ENCODE measurements at regions of chr12 and their contacts with region 1.

Region 1: GRCh38 chr12:6662906-6663742 is at the start of gene ING4:
- DNase-seq: peak; percentile 97 to 99 (median 98)
- ATAC-seq: peak; percentile 99 to 100 (median 100)
- H3K4me3 ChIP-seq: peak within 1 kb of the TSS; percentile 40 to 86 (median 74)
- H3K27ac ChIP-seq: peak within 1 kb of the TSS; percentile 51 to 90 (median 78)
- H3K4me1 ChIP-seq: peaks cover 0 to 24% (median 12%) of the 10 kb centered on the region in 12 donors
- H3K27me3 ChIP-seq: no peaks in the 10 kb centered on the region
- CTCF ChIP-seq: no peak
- POLR2A ChIP-seq: no peak
- total RNA-seq, gene ING4: 17.4 to 39.0 (median 24.7) TPM

Region 2: DNA sequence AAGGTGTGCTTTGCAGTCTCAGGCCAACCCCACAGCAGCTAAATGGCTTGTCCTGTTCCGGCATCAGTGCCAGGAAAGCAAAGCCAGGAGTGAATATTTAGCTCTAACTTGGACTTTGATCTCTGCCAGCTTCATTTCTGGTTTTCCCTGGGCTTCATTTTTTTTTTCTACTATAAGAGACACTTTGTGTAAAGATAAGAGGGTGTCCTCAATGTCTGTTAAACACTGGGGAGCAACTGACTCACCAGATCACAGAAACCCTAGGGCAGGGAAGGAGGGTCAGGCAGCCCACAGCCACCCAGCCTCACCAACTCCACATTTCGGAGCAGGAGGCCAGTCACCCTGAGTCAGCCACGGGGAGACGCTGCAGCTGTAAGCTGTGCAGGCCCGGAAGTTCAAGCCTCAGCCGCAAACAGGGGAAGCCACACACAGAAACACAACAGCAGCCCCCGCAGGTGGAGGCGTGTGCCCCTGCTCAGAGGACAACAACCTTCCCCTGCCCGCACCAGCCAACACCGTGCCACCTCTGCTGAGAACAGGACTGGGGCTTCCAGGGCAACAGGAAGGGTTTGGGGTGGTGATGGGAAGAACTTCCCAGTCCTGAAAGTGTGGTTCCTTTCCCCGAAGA is 327.6 kb before region 1 on chr12:
- intact Hi-C with region 1: no loop called
- DNase-seq: peak; percentile 78 to 91 (median 82)
- ATAC-seq: peak; percentile 43 to 63 (median 52)
- H3K4me3 ChIP-seq: peak overlapping the region in 11 of 12 donors; percentile 27 to 100 (median 82)
- H3K27ac ChIP-seq: peak overlapping the region; percentile 86 to 100 (median 98)
- H3K4me1 ChIP-seq: peaks cover 6 to 87% (median 67%) of the 10 kb centered on the region in 12 donors
- H3K27me3 ChIP-seq: no peaks in the 10 kb centered on the region
- CTCF ChIP-seq: peak in 11 of 12 donors; percentile 25 to 68 (median 50)
- POLR2A ChIP-seq: no peak

Region 3: GRCh38 chr12:6647083-6647604 is 16.0 kb before region 1 on chr12 and contains the start of gene ACRBP:
- intact Hi-C with region 1: loop called in 1 of 10 experiments (anchors 2 kb)
- DNase-seq: peak; percentile 80 to 91 (median 87)
- ATAC-seq: peak; percentile 77 to 97 (median 92)
- H3K4me3 ChIP-seq: peak within 1 kb of the TSS; percentile 3 to 65 (median 56)
- H3K27ac ChIP-seq: peak within 1 kb of the TSS in 11 of 12 donors; percentile 19 to 81 (median 62)
- H3K4me1 ChIP-seq: peaks cover 0 to 43% (median 2%) of the 10 kb centered on the region in 12 donors
- H3K27me3 ChIP-seq: no peaks in the 10 kb centered on the region
- CTCF ChIP-seq: no peak
- POLR2A ChIP-seq: peak in 1 of 2 donors; percentile 37
- total RNA-seq, gene ACRBP: 0.32 to 7.2 (median 0.99) TPM in 8 of 9 donors, not detected in the other

Region 4: GRCh38 chr12:6688999-6689882 is 26.1 kb after region 1 on chr12 and contains the start of gene ZNF384:
- intact Hi-C with region 1: loop called (anchors 1 to 2 kb)
- DNase-seq: peak; percentile 97 to 99 (median 98)
- ATAC-seq: peak; percentile 92 to 97 (median 94)
- H3K4me3 ChIP-seq: peak within 1 kb of the TSS; percentile 67 to 100 (median 88)
- H3K27ac ChIP-seq: peak within 1 kb of the TSS; percentile 88 to 100 (median 99)
- H3K4me1 ChIP-seq: peaks cover 0 to 50% (median 33%) of the 10 kb centered on the region in 12 donors
- H3K27me3 ChIP-seq: no peaks in the 10 kb centered on the region
- CTCF ChIP-seq: peak in 5 of 12 donors; percentile 8 to 37 (median 21)
- POLR2A ChIP-seq: peak in 1 of 2 donors; percentile 58
- total RNA-seq, gene ZNF384: 19.4 to 38.1 (median 25.2) TPM

Region 5: DNA sequence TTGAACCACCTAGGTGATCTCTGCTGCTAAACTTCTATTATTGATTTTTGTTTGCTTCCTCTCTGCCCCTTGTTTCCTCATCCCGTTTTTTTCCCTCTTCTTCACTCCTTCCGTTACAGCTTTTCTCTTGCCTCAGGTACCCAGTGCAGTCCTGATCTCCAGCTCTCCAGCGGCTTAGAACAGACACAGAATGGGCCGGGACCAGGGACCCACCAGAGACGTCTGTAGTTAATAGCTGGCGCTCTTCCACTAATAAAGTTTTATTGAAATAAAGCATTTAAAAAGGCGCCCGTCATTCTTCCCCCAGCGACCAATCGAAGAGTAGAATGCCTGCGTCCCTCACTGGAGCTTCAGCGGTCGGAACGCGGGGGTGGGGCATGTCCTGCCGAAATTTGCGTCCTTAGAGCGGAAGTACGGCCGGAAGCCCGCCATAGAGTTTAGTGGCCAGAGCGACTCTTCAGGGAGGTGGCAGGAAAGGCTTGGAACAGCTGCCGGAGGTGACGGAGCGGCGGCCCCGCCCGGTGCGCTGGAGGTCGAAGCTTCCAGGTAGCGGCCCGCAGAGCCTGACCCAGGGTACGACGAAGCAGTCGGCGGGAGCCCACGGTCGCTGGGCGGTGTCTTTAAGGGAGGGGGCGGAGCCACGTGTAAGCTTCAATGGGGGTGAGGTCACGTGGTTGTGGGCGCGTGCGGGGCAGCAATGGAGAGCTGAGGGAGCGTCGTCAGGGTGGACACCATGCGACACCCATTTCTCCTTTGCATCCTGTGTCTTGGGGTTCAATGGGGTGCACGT is 60.7 kb after region 1 on chr12 and contains the start of gene COPS7A:
- intact Hi-C with region 1: loop called in 3 of 10 experiments (anchors 2 to 10 kb)
- DNase-seq: peak; percentile 98 to 99 (median 99)
- ATAC-seq: peak; percentile 98 to 99 (median 99)
- H3K4me3 ChIP-seq: peak within 1 kb of the TSS; percentile 37 to 84 (median 66)
- H3K27ac ChIP-seq: peak within 1 kb of the TSS; percentile 68 to 95 (median 90)
- H3K4me1 ChIP-seq: peaks cover 0 to 23% (median 11%) of the 10 kb centered on the region in 12 donors
- H3K27me3 ChIP-seq: no peaks in the 10 kb centered on the region
- CTCF ChIP-seq: peak in 3 of 12 donors; percentile 8 to 18 (median 9)
- POLR2A ChIP-seq: peak in 1 of 2 donors; percentile 58
- total RNA-seq, gene COPS7A: 56.7 to 96.4 (median 82.6) TPM

Measured in heart left ventricle (tissue), 16 donors.